Activated CD4-positive, alpha-beta T cell treated with anti-CD3 and anti-CD28 coated beads for 36 hours (primary cell): ENCODE measurements at regions of chr22 and their contacts with region 1.

Region 1: GRCh38 chr22:22748297-22748743 is 103.9 kb downstream of the GGTLC2 start:
- DNase-seq: peak; percentile 60
- ATAC-seq: peak; percentile 79
- H3K4me3 Mint-ChIP-seq: no peak overlapping the region
- H3K27ac Mint-ChIP-seq: no peak overlapping the region
- H3K4me1 Mint-ChIP-seq: peaks cover 6% of the 10 kb centered on the region
- H3K27me3 Mint-ChIP-seq: no peaks in the 10 kb centered on the region

Region 2: DNA sequence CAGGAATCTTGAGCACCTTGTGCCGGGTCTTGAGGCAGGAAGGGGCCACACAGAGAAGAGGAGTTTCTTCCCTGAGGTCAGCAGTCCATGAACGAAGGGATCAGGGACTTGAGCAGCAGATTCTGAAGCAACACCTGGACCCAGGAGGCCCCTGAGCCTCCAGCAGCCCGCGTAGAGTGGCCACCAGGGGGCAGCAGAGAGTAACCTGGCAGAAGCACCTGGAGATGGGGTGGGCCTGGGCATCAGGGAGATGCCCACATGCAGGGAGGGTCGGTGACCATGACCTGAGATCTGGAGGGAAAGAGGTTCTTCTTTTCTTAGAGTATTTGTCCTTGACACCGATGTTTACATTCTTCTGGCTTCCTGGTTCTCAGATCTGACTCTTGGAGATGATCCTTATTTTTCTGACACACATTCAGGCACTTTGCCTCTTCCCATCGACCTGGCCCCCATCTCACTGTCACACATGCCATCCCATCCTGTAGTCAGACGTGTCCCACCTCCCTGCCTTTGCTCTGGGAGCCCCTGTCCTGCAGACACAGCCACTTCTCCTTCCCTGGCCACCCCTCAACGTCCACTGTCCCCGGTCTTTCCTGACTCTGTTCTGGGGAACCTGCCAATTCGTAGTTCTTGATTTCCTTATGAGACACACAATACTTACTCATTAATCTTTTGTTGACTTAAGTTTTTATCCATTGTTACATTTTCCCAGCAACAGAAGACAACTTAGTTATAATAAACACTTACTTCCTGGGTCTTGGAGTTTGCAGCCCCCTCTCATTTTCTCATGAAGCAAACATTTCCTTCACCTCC is 37.4 kb before region 1 on chr22:
- CTCF ChIA-PET with region 1: interaction called, 7 read pairs
- POLR2A ChIA-PET with region 1: no interaction called
- intact Hi-C with region 1: loop called (anchors 1 kb)
- DNase-seq: peak; percentile 86
- ATAC-seq: peak; percentile 58
- H3K4me3 Mint-ChIP-seq: no peak overlapping the region
- H3K27ac Mint-ChIP-seq: no peak overlapping the region
- H3K4me1 Mint-ChIP-seq: no peaks in the 10 kb centered on the region
- H3K27me3 Mint-ChIP-seq: no peaks in the 10 kb centered on the region